ENCODE measurements at regions of chr15 and their contacts with region 1.

Region 1: DNA sequence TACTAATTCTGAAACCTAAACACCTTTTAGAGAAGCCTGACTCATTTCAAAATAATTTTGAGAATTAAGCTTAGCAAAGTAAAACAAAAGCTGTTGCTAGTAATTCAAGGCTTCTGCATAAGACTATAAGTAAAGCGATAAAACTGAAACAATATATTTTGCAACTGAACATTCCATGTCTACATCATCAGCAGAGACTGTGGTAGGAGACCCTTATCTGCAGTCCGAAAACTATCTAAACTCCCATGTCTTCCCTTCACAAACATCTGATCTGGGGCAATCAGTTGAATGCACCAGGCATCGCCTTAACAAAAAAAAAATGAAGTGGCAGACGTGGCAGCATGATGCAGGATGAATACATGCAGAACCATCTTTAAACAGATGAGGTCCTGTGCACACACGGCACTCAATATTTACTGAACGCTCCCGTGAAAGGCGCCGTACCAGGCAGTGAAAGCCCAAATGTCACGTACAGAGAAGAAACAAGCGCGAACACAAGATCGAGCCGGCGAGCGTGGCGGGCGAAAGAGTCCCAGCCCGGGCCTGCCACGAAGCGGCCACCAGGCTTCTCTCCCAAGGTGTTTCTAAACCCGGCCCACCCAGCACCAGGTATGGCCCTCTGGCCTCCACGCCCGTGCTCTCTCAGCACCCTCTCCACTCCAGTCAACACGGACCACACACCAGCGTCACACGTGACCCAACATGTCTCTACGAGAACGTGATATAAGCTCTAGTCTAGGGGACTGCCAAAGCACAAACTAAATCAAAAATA is 63.0 kb downstream of the CHSY1 start:
- DNase-seq: no peak
- H3K4me3 Mint-ChIP-seq: peak overlapping the region; percentile 59
- H3K27ac Mint-ChIP-seq: peak overlapping the region; percentile 94
- H3K4me1 Mint-ChIP-seq: peaks cover 77% of the 10 kb centered on the region
- H3K27me3 Mint-ChIP-seq: no peaks in the 10 kb centered on the region

Region 2: GRCh38 chr15:101167753-101168463 is 20.9 kb before region 1 on chr15:
- intact Hi-C with region 1: loop called (anchors 1 kb)
- DNase-seq: peak; percentile 80
- H3K4me3 Mint-ChIP-seq: peak overlapping the region; percentile 43
- H3K27ac Mint-ChIP-seq: peak overlapping the region; percentile 92
- H3K4me1 Mint-ChIP-seq: peaks cover 44% of the 10 kb centered on the region
- H3K27me3 Mint-ChIP-seq: no peaks in the 10 kb centered on the region

Region 3: GRCh38 chr15:101178479-101178878 is 10.3 kb before region 1 on chr15:
- intact Hi-C with region 1: no loop called
- DNase-seq: no peak
- H3K4me3 Mint-ChIP-seq: no peak overlapping the region
- H3K27ac Mint-ChIP-seq: no peak overlapping the region
- H3K4me1 Mint-ChIP-seq: peaks cover 66% of the 10 kb centered on the region
- H3K27me3 Mint-ChIP-seq: no peaks in the 10 kb centered on the region

Region 4: DNA sequence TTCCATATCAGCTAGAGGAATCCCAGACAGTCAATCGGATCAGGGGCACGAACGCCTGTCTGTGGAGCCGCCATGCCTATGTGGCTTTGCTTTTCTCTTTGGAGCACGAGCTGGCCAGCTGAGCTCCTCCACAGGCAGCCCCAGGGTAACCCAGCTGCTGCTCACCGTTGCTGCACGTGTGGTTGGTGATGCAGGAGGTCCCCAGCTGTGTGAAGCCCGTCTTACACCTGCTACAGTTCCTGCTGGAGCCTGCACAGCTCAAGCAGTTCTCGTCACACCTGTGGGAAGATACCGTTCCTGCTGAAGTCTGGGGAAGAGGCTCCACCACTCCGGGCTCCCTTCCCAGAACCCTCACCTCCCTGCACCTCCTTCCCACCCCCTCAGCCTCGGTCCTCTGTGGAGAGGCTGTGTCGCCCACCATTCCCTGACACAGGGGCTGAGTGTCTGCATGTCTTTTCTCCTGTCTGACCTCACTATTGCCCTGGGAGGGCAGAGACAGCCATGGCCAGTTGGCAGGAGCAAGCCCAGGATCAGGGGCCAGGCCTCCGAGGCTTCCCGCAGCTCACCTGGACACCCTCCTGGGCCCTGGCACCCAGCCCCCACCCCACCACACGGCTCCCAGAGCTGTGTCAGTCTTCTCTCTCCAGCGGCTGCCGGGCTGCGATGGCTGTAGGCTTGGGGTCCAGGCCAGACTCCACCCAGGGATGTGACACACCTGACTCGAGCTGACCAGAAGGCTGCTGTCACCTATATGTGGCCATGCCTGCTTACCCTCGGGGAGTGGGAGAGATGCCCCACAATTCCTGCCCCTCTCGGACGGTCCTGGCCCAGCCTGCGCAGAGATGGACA is 118.4 kb after region 1 on chr15:
- intact Hi-C with region 1: no loop called
- DNase-seq: no peak
- H3K4me3 Mint-ChIP-seq: no peak overlapping the region
- H3K27ac Mint-ChIP-seq: no peak overlapping the region
- H3K4me1 Mint-ChIP-seq: no peaks in the 10 kb centered on the region
- H3K27me3 Mint-ChIP-seq: no peaks in the 10 kb centered on the region